ENCODE measurements at regions of chr7 and their contacts with region 1.

Region 1: DNA sequence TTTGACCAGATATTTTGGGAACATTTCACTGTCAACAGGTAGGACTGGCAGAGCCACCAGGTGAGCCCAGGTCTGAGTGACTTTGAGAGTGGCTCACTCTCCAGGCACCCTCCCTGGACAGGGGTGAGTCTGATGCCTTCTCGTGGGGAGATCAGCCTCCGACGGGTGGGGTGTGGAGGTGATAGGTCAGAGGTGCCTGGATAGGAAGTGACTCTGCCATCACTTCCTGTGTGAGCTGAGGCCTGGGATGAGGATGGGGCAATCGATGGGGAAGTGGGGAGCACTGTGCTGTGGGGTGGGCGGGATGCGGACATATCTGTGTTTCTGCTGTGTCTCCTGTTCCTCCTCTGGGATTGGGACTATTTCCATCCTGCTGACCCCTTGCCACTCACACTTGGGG is 34.6 kb downstream of the IFT22 start:
- DNase-seq: no peak
- H3K4me3 ChIP-seq: no peak overlapping the region
- H3K27ac ChIP-seq: no peak overlapping the region
- H3K4me1 ChIP-seq: peaks cover 0 to 10% (median 0%) of the 10 kb centered on the region in 3 donors
- H3K27me3 ChIP-seq: peaks cover 0 to 41% (median 0%) of the 10 kb centered on the region in 4 donors
- CTCF ChIP-seq: no peak
- POLR2A ChIP-seq: no peak

Region 2: DNA sequence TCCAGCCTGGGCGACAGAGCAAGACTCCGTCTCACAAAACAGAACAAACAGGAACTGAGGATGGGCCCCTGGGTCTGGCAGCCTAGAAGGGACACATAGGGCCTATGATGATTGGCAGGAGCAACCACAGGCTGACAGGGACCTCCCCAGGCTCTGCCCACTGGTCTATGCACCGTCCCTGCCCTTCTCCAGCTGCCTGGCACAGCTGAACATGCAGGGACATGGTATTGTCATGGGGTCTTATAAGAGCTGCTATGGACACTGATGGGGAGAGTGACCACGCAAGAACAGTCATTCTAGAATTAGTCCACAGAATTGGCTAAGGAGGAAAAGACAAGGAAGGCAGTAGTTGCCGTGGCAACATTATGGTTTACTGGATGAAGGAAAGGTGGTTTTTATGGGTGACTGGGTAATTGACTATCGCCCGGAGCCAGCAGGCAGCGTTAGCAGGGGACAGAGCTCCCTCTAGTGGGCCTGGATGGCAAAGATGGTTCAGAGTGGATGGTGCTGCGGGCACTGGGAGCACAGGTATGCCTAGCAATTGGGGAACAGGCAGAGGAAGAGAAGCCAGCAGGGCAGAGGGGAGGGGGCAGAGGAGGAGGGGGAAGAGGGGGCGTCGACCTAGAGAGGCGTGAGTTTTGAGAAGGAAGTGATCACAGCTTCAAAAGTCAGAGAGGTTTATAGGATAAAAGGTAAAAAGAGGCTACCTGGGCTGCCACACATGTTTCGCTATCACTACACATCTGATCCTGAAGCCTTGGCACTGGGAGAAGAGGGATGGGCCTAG is 209.5 kb before region 1 on chr7:
- intact Hi-C with region 1: no loop called
- DNase-seq: no peak
- H3K4me3 ChIP-seq: no peak overlapping the region
- H3K27ac ChIP-seq: no peak overlapping the region
- H3K4me1 ChIP-seq: peaks cover 0 to 7% (median 0%) of the 10 kb centered on the region in 3 donors
- H3K27me3 ChIP-seq: peaks cover 0 to 10% (median 0%) of the 10 kb centered on the region in 4 donors
- CTCF ChIP-seq: peak; percentile 54 to 85 (median 76)
- POLR2A ChIP-seq: no peak

Region 3: DNA sequence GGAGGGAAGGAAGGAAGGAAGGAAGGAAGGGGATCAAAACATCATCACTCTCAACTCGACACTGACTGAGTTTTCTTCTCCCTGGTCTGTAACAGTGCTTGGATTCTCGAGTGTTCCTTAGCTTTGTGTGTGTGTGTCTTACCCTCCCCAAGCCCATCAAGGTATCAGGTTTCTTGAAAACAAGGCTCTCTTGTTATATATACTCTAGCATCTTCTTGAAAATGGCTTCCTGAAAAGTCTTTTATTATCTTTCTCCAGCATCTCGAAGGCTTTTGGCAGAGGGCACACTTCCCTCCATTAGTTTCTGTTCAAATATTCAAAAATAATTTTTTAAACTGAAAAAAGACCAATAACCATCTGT is 146.7 kb before region 1 on chr7:
- intact Hi-C with region 1: loop called (anchors 10 kb)
- DNase-seq: no peak
- H3K4me3 ChIP-seq: no peak overlapping the region
- H3K27ac ChIP-seq: peak overlapping the region in 1 of 4 donors; percentile 19
- H3K4me1 ChIP-seq: peaks cover 0 to 43% (median 14%) of the 10 kb centered on the region in 3 donors
- H3K27me3 ChIP-seq: no peaks in the 10 kb centered on the region
- CTCF ChIP-seq: no peak
- POLR2A ChIP-seq: no peak

Measured in esophagus squamous epithelium (tissue), 5 donors.